ENCODE measurements at regions of chr14 and their contacts with region 1.

Region 1: GRCh38 chr14:74612350-74613021 is 449 bp upstream of the LTBP2 start:
- DNase-seq: peak; percentile 95
- ATAC-seq: peak; percentile 89
- H3K4me3 Mint-ChIP-seq: peak overlapping the region; percentile 80
- H3K27ac Mint-ChIP-seq: no peak overlapping the region
- H3K4me1 Mint-ChIP-seq: peaks cover 42% of the 10 kb centered on the region
- H3K27me3 Mint-ChIP-seq: peaks cover 11% of the 10 kb centered on the region
- CTCF ChIP-seq: no peak

Region 2: GRCh38 chr14:74257078-74257989 is 355.2 kb before region 1 on chr14:
- CTCF ChIA-PET with region 1: no interaction called
- POLR2A ChIA-PET with region 1: no interaction called
- intact Hi-C with region 1: no loop called
- DNase-seq: peak; percentile 63
- ATAC-seq: peak; percentile 97
- H3K4me3 Mint-ChIP-seq: peak overlapping the region; percentile 81
- H3K27ac Mint-ChIP-seq: no peak overlapping the region
- H3K4me1 Mint-ChIP-seq: peaks cover 12% of the 10 kb centered on the region
- H3K27me3 Mint-ChIP-seq: peaks cover 11% of the 10 kb centered on the region
- CTCF ChIP-seq: peak; percentile 70

Region 3: GRCh38 chr14:74362361-74362915 is 250.0 kb before region 1 on chr14:
- CTCF ChIA-PET with region 1: interaction called, 4 read pairs
- POLR2A ChIA-PET with region 1: no interaction called
- intact Hi-C with region 1: loop called (anchors 1 kb)
- DNase-seq: peak; percentile 56
- ATAC-seq: peak; percentile 87
- H3K4me3 Mint-ChIP-seq: no peak overlapping the region
- H3K27ac Mint-ChIP-seq: no peak overlapping the region
- H3K4me1 Mint-ChIP-seq: peaks cover 3% of the 10 kb centered on the region
- H3K27me3 Mint-ChIP-seq: peaks cover 2% of the 10 kb centered on the region
- CTCF ChIP-seq: peak; percentile 80

Region 4: DNA sequence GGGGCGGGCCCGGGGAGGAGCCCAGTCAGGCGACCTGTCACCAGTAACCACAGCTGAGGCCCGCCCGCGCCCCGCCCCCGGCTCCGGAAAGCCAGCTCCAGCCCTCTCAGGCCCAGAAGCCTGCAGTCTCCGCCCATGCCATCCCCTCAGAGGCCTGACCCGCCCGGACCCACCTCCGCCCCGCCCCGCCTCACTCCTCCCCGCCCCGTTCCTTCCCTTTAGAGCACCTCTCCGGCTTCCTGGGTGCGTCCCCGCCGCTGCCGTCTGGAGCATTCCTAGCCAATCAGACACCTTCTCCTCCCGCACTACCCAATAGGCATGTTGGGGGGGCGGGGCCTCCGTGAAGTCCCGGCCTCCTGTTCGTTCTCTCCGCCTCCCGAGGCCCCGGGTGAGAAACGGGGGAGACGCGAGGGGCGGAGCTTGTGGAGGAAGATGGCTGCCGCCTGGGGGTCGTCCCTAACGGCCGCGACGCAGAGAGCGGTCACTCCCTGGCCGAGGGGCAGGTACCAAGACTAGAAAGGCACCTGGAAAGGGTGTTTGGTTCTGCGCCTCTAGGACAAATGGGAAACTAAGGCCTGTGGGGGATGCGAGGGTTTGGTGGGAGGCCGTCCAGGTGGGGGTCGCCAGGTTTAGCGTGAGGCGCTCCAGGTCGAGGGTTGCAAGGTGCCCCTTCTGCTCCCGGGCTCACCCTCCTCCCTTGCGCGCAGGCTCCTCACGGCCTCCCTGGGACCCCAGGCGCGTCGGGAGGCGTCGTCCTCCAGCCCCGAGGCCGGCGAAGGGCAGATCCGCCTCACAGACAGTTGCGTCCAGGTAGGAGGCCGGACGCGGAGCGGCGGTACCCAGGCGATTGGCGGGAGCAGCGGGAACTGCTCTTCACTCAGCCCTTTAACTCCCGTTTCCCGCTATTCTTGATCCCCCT is 118.9 kb before region 1 on chr14 and contains the start of gene ISCA2:
- CTCF ChIA-PET with region 1: interaction called, 3 read pairs
- POLR2A ChIA-PET with region 1: no interaction called
- intact Hi-C with region 1: loop called (anchors 2 kb)
- DNase-seq: peak; percentile 98
- ATAC-seq: peak; percentile 90
- H3K4me3 Mint-ChIP-seq: no peak within 1 kb of the TSS
- H3K27ac Mint-ChIP-seq: no peak within 1 kb of the TSS
- H3K4me1 Mint-ChIP-seq: peaks cover 34% of the 10 kb centered on the region
- H3K27me3 Mint-ChIP-seq: no peaks in the 10 kb centered on the region
- CTCF ChIP-seq: no peak
- total RNA-seq, gene ISCA2: 35.0 and 35.3 TPM in 2 replicates

Region 5: DNA sequence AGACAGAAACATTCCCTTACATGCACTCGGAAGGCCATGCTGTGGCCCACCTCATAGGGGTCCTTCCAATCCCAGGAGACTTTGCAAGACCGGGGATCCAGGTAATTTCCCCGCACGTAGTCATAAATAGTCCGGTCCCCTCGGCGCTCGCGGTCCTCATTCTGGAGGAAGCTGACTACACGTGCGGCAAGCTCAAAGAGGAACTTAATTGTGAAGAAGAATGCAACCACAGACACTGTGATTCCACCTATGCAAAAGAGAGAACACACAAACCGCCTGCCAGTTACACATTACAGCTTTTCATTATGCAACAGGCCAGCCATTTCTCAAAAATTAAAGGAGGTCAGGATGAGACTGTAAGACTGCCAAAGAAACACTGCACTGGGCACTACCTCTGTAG is 71.9 kb after region 1 on chr14:
- CTCF ChIA-PET with region 1: interaction called, 7 read pairs
- POLR2A ChIA-PET with region 1: no interaction called
- intact Hi-C with region 1: loop called (anchors 2 kb)
- DNase-seq: peak; percentile 18
- ATAC-seq: peak; percentile 90
- H3K4me3 Mint-ChIP-seq: peak overlapping the region; percentile 58
- H3K27ac Mint-ChIP-seq: peak overlapping the region; percentile 68
- H3K4me1 Mint-ChIP-seq: peaks cover 31% of the 10 kb centered on the region
- H3K27me3 Mint-ChIP-seq: no peaks in the 10 kb centered on the region
- CTCF ChIP-seq: no peak

Region 6: GRCh38 chr14:74737753-74738325 is 125.4 kb after region 1 on chr14:
- CTCF ChIA-PET with region 1: no interaction called
- POLR2A ChIA-PET with region 1: no interaction called
- intact Hi-C with region 1: no loop called
- DNase-seq: no peak
- ATAC-seq: no peak
- H3K4me3 Mint-ChIP-seq: no peak overlapping the region
- H3K27ac Mint-ChIP-seq: no peak overlapping the region
- H3K4me1 Mint-ChIP-seq: no peaks in the 10 kb centered on the region
- H3K27me3 Mint-ChIP-seq: no peaks in the 10 kb centered on the region
- CTCF ChIP-seq: no peak

Region 7: DNA sequence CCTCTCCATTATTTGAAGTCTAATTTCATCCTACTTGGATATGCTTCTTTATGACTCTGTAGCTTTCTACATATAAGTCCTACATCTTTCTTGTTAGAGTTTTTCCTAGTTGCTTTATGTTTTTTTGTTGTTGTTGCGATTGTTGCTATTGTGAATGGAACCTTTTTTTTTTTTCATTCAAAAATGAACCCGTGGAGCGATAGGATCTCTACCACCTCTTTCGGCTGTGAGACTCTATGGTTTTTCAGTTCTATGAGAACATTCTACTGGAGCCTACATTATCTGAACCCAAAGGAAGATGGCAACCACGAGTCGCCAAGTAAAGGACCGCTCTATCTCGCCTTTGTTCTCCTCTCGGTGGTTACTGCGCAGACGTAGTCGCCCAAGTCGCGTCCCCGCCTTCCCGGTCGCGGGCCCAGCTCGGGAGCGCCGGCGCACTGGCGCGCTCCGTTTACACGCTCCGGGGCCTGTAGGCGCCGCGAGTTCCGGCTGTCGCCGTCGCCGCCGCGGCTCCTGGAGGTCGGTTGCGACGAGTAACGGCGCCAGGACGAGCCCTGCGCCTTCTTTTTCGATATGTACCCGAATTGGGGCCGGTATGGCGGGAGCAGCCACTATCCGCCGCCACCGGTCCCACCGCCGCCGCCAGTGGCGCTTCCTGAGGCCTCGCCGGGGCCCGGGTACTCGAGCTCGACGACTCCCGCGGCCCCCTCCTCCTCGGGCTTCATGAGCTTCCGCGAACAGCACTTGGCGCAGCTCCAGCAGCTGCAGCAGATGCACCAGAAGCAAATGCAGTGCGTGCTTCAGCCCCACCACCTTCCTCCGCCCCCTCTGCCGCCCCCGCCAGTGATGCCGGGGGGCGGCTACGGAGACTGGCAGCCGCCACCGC is 150.7 kb after region 1 on chr14 and contains the start of gene YLPM1:
- CTCF ChIA-PET with region 1: interaction called, 8 read pairs
- POLR2A ChIA-PET with region 1: interaction called, 4 read pairs
- intact Hi-C with region 1: loop called (anchors 2 kb)
- DNase-seq: peak; percentile 86
- ATAC-seq: peak; percentile 95
- H3K4me3 Mint-ChIP-seq: peak within 1 kb of the TSS; percentile 90
- H3K27ac Mint-ChIP-seq: peak within 1 kb of the TSS; percentile 90
- H3K4me1 Mint-ChIP-seq: peaks cover 55% of the 10 kb centered on the region
- H3K27me3 Mint-ChIP-seq: no peaks in the 10 kb centered on the region
- CTCF ChIP-seq: no peak
- total RNA-seq, gene YLPM1: 68.5 and 85.9 TPM in 2 replicates

Region 8: GRCh38 chr14:74860906-74861733 is 248.6 kb after region 1 on chr14:
- CTCF ChIA-PET with region 1: interaction called, 12 read pairs
- POLR2A ChIA-PET with region 1: no interaction called
- intact Hi-C with region 1: loop called (anchors 1 kb)
- DNase-seq: peak; percentile 82
- ATAC-seq: peak; percentile 74
- H3K4me3 Mint-ChIP-seq: no peak overlapping the region
- H3K27ac Mint-ChIP-seq: no peak overlapping the region
- H3K4me1 Mint-ChIP-seq: peaks cover 6% of the 10 kb centered on the region
- H3K27me3 Mint-ChIP-seq: no peaks in the 10 kb centered on the region
- CTCF ChIP-seq: no peak

Region 9: DNA sequence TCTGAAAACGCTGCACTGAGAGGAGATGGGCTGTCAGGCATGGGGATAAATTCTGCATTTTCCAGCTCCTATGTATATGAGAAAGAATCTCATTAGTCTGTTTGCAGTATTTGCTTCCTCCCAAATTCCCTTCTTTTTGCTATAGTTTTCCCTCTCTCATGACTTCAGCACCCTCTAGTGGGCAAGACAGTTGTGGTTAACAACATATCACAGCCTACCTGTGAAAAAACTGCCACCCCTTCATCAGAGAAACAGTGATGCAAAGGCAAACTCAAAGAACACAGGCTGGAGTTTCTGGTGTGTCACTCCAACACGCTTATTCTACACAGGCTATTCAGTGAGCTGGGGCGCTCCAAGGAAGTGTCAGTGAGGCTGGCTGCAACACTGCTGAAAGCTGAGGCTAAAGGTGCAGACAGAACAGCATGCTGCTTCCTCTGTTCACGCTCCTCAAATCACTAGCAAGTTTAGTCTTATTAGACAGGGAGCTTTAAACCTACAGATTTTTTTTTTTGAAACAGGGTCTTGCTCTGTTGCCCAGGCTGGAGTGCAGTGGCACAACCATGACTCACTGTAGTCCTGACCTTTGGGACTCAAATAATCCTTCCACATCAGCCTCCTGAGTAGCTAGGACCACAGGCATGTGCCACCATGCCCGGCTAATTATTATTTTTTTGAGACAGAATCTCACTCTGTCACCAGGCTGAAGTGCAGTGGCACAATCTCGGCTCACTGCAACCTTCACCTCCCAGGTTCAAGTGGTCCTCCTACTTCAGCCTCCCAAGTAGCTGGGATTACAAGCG is 476.3 kb after region 1 on chr14:
- CTCF ChIA-PET with region 1: interaction called, 10 read pairs
- POLR2A ChIA-PET with region 1: no interaction called
- intact Hi-C with region 1: loop called (anchors 1 kb)
- DNase-seq: no peak
- ATAC-seq: peak; percentile 37
- H3K4me3 Mint-ChIP-seq: no peak overlapping the region
- H3K27ac Mint-ChIP-seq: no peak overlapping the region
- H3K4me1 Mint-ChIP-seq: no peaks in the 10 kb centered on the region
- H3K27me3 Mint-ChIP-seq: no peaks in the 10 kb centered on the region
- CTCF ChIP-seq: peak; percentile 72

Measured in activated B cell treated with CpG ODN at 0.5 μM for 24 hours (primary cell).